AG04449 (cell line): ENCODE measurements at regions of chr9 and their contacts with region 1.

Region 1: GRCh38 chr9:136728080-136728547 is 14.6 kb downstream of the LCN10 start:
- DNase-seq: peak; percentile 40
- H3K4me3 ChIP-seq: peak overlapping the region; percentile 84
- CTCF ChIP-seq: peak; percentile 97

Region 2: GRCh38 chr9:136711751-136712689 is 16.1 kb before region 1 on chr9 and contains the start of gene DIPK1B:
- CTCF ChIA-PET with region 1: interaction called, 27 read pairs
- POLR2A ChIA-PET with region 1: interaction called, 17 read pairs
- DNase-seq: no peak
- H3K4me3 ChIP-seq: peak within 1 kb of the TSS; percentile 34
- CTCF ChIP-seq: no peak

Region 3: DNA sequence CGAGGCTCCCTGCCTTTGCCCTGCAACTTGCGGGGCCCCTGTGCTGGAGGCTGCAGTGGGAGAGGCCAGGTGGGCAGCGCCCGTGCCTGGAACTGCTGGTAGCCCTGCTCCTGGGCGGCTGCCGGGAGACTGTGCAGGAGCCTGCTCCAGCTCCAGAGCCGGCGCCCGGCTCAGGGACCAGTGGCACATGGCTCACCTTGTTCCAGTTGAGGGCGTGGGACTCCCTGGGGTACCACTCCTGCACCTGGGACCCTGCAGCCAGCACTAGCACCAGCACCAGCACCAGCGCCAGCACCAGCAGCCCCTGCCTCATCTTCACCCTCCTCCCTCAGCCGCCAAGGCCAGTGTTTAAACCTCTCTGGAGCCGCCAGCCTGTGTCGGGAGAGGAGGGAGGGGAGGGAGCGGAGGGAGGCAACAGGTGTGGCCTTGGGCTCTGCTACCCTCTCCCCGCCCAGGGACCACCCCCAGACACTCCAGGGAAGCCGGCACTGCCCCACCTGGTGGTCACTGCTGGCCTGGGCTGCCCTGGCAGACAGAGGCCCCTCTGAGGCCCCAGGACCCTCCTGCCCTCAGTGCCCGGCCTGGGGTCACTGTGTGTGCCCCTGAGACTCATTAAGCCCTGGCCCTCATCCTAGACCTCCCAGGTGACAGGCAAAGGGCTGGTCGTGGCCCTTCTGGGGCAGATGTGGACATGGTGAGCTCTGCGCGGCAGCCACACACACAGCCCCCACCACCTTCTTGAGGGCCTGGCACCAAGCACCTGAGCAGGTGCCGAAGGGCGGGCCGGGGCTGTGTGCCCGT is 14.7 kb after region 1 on chr9 and contains the start of gene LCN10:
- CTCF ChIA-PET with region 1: interaction called, 6 read pairs
- POLR2A ChIA-PET with region 1: interaction called, 17 read pairs
- DNase-seq: no peak
- H3K4me3 ChIP-seq: no peak within 1 kb of the TSS
- CTCF ChIP-seq: peak; percentile 42

Region 4: GRCh38 chr9:136757328-136757727 is 29.2 kb after region 1 on chr9:
- CTCF ChIA-PET with region 1: interaction called, 25 read pairs
- POLR2A ChIA-PET with region 1: interaction called, 8 read pairs
- DNase-seq: no peak
- H3K4me3 ChIP-seq: no peak overlapping the region
- CTCF ChIP-seq: no peak

Region 5: DNA sequence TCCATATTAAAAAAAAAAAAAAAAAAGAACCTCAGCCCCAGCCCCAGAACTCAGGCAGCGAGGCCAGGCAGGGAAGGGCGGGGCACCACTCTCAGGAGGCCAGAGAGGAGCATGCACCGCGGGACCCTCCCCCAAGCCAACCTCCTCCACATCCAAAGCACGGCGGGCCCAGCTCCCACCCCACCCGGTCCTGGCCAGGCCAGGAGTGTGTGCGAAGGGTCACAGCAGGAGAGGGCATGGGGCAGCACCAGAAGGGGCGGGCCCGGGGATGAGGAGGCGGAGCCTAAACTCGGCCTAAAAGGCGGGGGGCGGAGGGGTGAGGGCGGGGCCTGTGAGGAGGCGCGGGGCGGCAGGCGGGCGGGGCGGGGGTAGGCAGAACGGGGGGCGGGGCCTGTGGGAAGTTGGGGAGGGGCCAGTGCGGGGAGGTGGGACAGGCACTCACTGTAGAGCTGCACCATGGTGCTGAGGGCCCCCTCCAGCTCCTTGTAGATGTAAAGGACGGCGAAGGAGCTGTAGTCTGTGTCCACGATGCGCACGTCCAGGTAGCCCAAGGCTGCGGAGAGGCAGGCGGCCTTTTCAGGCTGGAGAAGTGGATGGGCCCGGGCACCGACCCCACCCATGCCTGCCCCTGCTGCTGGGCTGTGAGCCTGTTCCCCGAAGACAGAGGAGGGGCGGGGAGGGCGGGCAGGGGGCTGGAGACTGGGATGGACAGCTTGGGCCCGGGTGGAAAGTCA is 35.0 kb after region 1 on chr9:
- CTCF ChIA-PET with region 1: interaction called, 25 read pairs
- POLR2A ChIA-PET with region 1: interaction called, 8 read pairs
- DNase-seq: no peak
- H3K4me3 ChIP-seq: no peak overlapping the region
- CTCF ChIP-seq: no peak